Left colon (tissue), 2 donors: ENCODE measurements at regions of chrX and their contacts with region 1.

Region 1: GRCh38 chrX:140141444-140142029 is 176.2 kb upstream of the CXorf66 start:
- DNase-seq: peak in 1 of 2 donors; percentile 9
- ATAC-seq: peak; percentile 45

Region 2: DNA sequence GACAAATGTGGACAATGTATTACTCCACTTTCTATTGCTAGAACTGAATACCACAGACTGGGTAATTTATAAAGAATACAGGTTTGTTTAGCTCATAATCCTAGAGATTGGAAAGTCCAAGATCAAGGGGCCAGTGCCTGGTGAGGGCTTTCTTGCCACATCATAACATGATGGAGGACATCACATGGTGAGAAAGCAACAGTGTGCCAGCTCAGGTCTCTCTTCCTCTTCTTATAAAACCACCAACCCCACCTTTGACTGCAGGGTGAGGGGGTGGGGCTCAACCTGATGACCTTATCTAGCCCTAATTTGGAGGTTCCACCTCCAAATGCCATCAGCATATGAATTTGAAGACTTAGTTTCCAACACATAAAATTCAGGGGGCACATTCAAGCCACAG is 70.5 kb before region 1 on chrX:
- intact Hi-C with region 1: loop called in 1 of 2 experiments (anchors 2 kb)
- DNase-seq: no peak
- ATAC-seq: no peak